Posterior vena cava (tissue), 2 donors: ENCODE measurements at regions of chr12 and their contacts with region 1.

Region 1: GRCh38 chr12:115199831-115200230 is 515.9 kb upstream of the TBX3 start:
- DNase-seq: no peak

Region 2: DNA sequence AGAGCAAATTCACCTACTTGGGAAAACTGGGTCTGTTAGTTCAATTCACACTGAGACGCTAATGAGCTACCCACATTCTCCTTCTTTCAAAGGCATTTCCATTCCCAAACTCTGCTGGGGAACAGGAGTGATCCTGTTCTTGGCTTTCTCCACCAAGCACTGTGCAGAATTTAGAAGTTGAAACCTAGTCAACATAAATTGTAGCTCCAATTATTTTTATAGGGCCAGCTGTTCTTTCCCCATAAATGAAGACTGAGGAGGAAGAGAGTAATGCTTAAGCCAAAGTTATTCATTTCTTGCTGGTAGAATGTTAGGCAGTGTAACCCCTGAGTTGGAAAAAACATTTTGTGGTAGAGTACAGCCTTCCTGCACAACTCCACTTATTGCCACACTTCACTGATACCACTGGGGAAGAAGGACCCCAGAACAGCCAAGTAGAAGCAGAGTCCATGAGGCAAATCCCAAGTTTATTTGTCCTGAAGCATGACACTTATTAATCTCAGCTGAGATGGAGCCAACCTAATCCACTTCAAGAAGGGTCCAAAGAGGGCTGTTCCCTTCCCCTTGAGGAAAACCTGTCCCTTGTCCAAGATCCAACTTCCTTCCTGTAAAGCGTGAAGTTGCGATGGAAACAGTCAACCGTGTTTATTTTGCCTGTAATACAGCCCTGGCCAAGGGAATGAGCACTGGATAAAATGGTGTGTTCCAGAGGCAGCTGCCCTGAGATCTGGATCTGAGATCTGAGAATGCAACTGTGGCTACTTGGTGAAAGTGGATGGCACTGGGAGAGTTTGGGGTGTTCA is 945.7 kb before region 1 on chr12:
- intact Hi-C with region 1: no loop called
- DNase-seq: no peak

Region 3: GRCh38 chr12:114311974-114312373 is 887.9 kb before region 1 on chr12:
- intact Hi-C with region 1: loop called in 1 of 2 experiments (anchors 5 kb)
- DNase-seq: peak; percentile 83

Region 4: GRCh38 chr12:115172521-115172920 is 27.3 kb before region 1 on chr12:
- intact Hi-C with region 1: no loop called
- DNase-seq: no peak